ENCODE measurements at regions of chr17 and their contacts with region 1.

Region 1: DNA sequence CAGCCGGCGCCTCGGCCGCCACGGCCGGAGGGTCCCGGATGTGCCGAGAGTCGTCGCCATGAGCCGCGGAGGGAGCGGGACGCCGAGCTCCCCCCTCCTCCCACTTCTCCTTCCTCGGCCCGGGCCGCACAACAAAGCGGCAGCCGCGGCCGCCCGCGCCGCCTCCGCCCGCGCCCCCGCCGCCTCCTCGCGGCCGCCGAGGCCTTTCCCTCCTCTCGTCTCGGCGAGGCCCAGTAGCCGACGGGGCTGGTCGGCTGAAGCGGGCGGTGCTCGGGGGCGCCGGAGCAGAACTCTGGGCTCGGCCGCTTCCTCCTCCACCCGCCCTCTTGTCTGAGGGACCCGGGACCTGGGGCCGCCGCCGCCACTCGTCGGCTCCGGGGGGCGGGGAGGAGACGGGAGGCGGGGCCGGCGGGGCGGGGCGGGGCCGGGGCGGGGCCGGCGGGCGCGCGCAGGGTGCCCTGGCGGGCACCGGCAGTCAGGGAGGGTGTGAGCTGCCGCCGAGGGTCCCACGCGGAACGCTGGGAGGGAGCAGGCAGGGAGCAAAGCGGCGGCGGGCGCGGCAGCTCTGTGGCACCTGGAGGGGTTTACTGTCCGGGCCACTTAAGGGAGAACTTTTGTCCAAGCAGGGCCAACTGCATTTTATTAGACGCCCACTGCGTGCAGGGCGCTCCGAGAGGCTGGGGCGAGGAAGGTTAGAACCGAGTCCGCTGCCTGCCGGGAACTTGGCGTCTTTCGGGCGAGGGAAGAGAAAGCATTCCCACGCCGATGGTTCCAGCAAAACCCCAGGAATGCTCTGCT is at the start of gene SMURF2:
- DNase-seq: peak; percentile 74 to 94 (median 92)
- ATAC-seq: peak; percentile 88
- H3K4me3 ChIP-seq: peak within 1 kb of the TSS; percentile 85
- H3K27ac ChIP-seq: peak within 1 kb of the TSS; percentile 88
- H3K4me1 ChIP-seq: peaks cover 7 to 11% of the 10 kb centered on the region in 2 experiments; a peak in 4 of 5 replicates
- H3K27me3 ChIP-seq: no peaks in the 10 kb centered on the region
- CTCF ChIP-seq: no peak
- EP300 ChIP-seq: no peak
- POLR2A ChIP-seq: peak; percentile 55; the same call in 1 of the 2 replicates
- RAD21 ChIP-seq: no peak
- polyA plus RNA-seq, gene SMURF2: 3.8 to 5.0 TPM

Region 2: GRCh38 chr17:64736804-64737492 is 74.8 kb after region 1 on chr17:
- CTCF ChIA-PET with region 1: no interaction called
- POLR2A ChIA-PET with region 1: no interaction called
- in situ Hi-C with region 1: no loop called
- intact Hi-C with region 1: loop called (anchors 5 kb)
- DNase-seq: peak in 1 of 4 experiments; percentile 51
- ATAC-seq: peak; percentile 86
- H3K4me3 ChIP-seq: no peak overlapping the region
- H3K27ac ChIP-seq: no peak overlapping the region
- H3K4me1 ChIP-seq: peaks cover 2 to 4% of the 10 kb centered on the region in 2 experiments; a peak in 1 of 5 replicates
- H3K27me3 ChIP-seq: no peaks in the 10 kb centered on the region
- CTCF ChIP-seq: peak; percentile 54 to 71 (median 69)
- EP300 ChIP-seq: no peak
- POLR2A ChIP-seq: no peak
- RAD21 ChIP-seq: peak; percentile 55 to 75

Measured in K562 (cell line).